ENCODE measurements at regions of chr6 and their contacts with region 1.

Region 1: GRCh38 chr6:136643850-136644596 is 93.8 kb upstream of the MAP7 start:
- DNase-seq: peak; percentile 75
- ATAC-seq: peak; percentile 99
- H3K4me3 ChIP-seq: no peak overlapping the region
- H3K27ac ChIP-seq: no peak overlapping the region
- H3K4me1 ChIP-seq: no peaks in the 10 kb centered on the region
- H3K27me3 ChIP-seq: no peaks in the 10 kb centered on the region
- CTCF ChIP-seq: peak; percentile 93

Region 2: DNA sequence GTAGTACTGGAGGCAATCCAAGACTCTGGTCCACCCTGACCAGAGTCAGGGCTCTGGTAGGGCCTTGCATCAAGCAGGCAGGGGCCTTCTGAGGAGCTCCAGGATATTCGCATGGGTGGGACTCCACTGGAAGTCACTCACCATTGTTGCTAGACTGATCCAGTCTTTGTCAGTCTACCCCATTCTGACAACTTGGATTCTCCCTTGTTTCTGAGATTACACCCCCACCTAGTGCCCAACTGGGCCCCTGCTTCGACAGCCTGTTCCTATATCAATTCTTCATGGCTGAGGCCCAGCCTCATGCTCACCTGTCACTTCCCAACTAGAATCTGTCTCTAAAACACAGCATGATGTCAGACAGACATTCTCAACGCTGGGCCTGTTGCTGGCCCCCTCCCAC is 283.3 kb after region 1 on chr6:
- CTCF ChIA-PET with region 1: no interaction called
- POLR2A ChIA-PET with region 1: no interaction called
- in situ Hi-C with region 1: no loop called
- intact Hi-C with region 1: loop called (anchors 10 kb)
- DNase-seq: peak; percentile 15
- ATAC-seq: peak; percentile 65; the same call in 1 of the 2 replicates
- H3K4me3 ChIP-seq: no peak overlapping the region
- H3K27ac ChIP-seq: no peak overlapping the region
- H3K4me1 ChIP-seq: no peaks in the 10 kb centered on the region
- H3K27me3 ChIP-seq: no peaks in the 10 kb centered on the region; the same call in 1 of the 2 replicates
- CTCF ChIP-seq: peak; percentile 57

Measured in Panc1 (cell line).